Heart right ventricle (tissue), 16 donors: ENCODE measurements at regions of chr14 and their contacts with region 1.

Region 1: GRCh38 chr14:101440496-101440895 is 120.8 kb upstream of the DIO3 start:
- DNase-seq: no peak
- ATAC-seq: no peak
- H3K4me3 ChIP-seq: no peak overlapping the region
- H3K27ac ChIP-seq: no peak overlapping the region
- H3K4me1 ChIP-seq: peaks cover 0 to 7% (median 0%) of the 10 kb centered on the region in 9 donors
- H3K27me3 ChIP-seq: peaks cover 0 to 43% (median 20%) of the 10 kb centered on the region in 7 donors
- CTCF ChIP-seq: no peak

Region 2: DNA sequence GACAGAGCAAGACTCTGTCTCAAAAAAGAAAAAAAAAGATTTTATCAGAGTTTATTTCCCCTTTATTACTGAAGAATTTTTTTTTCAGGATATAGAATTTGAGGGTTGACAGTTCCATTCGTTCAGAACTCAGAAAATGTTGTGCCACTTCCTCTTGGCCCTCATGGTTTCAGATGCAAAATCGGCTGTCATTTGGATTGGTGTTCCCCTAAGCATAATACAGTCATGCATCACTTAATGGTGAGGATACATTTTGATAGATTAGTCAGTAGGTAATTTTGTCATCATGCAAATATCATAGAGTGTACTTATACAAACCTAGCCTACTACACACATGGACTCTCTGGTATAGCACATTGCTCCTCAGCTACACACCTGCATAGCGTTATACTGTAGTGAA is 273.1 kb before region 1 on chr14:
- intact Hi-C with region 1: no loop called
- DNase-seq: no peak
- ATAC-seq: no peak
- H3K4me3 ChIP-seq: no peak overlapping the region
- H3K27ac ChIP-seq: no peak overlapping the region
- H3K4me1 ChIP-seq: no peaks in the 10 kb centered on the region
- H3K27me3 ChIP-seq: peaks cover 0 to 15% (median 0%) of the 10 kb centered on the region in 7 donors
- CTCF ChIP-seq: no peak

Region 3: GRCh38 chr14:101495827-101496775 is 55.6 kb after region 1 on chr14:
- intact Hi-C with region 1: loop called in 1 of 10 experiments (anchors 2 kb)
- DNase-seq: no peak
- ATAC-seq: no peak
- H3K4me3 ChIP-seq: no peak overlapping the region
- H3K27ac ChIP-seq: no peak overlapping the region
- H3K4me1 ChIP-seq: no peaks in the 10 kb centered on the region
- H3K27me3 ChIP-seq: peaks cover 5 to 84% (median 34%) of the 10 kb centered on the region in 7 donors
- CTCF ChIP-seq: no peak

Region 4: DNA sequence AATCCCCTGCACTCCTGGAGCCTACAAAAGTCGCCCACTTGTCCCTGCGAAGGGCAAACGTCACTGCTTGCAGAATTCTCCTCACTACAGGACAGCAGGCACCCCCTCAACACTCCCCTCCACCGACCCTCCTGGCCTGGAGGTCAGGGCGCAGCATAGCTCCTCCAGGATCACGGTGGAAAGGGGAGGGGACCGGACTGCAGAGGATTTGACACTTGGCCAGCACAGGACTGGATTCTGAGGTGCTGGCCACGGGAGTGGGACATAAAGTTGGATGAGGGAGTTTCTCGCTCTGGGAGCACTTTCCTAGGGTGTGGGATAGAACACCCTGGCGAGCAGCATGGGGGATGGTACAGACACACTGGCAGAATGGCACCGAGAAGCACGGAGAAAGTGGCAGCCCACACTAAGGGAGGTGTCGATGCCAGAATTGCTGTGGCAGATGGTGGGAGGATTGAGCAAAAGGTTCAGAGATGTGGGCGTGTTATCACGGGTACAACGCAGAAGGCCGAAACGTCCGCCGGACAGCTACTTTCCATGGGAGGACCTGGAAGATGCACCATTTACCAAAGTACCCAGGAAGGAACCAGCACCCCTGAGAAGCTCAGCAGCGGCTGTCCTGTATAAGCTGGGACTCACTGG is 69.4 kb after region 1 on chr14:
- intact Hi-C with region 1: loop called in 1 of 10 experiments (anchors 2 kb)
- DNase-seq: no peak
- ATAC-seq: no peak
- H3K4me3 ChIP-seq: no peak overlapping the region
- H3K27ac ChIP-seq: no peak overlapping the region
- H3K4me1 ChIP-seq: peaks cover 0 to 6% (median 0%) of the 10 kb centered on the region in 9 donors
- H3K27me3 ChIP-seq: peaks cover 0 to 10% (median 0%) of the 10 kb centered on the region in 7 donors
- CTCF ChIP-seq: no peak

Region 5: DNA sequence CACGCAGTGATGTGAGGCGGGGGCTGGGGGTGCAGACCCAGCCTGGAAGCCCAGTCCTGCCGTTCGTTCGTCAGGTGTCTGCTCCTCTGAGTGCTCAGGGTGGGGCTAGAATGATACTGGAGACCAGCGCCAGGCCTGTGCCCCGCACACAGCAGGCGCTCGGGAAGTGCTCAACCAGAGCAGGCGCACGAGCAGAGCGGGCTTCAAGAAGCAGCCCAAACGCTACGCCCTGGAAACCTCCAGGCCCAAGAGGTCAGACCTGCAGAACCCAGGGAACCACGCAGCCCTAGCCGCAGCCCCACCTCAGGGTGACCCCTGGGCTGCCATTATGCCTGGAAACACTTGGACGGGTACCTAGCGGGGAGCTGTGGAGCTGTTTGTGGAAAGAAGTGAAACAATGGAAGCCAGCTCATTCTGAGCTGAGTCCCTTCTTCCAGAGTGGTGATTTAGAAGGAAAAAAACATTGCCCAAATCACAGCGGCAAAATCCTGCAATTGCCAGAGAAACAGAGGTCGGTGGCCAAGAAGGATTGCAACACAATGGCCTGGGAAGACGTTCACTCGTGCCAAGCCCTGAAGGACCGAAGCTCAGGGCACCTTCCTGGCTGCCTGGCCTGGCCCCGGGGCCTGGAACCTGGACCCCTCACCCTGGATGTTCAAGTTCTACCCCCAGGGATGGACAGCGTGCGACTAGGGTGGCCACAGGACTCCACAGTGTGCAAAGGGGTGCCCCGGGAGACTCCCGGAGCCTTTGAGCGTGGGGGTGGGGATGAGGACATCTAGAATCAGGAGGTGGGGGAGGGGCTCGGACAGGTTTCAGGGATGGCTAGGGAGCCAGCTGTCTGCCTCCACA is 80.4 kb after region 1 on chr14:
- intact Hi-C with region 1: no loop called
- DNase-seq: no peak
- ATAC-seq: peak in 6 of 8 donors; percentile 16 to 47 (median 22)
- H3K4me3 ChIP-seq: no peak overlapping the region
- H3K27ac ChIP-seq: no peak overlapping the region
- H3K4me1 ChIP-seq: no peaks in the 10 kb centered on the region
- H3K27me3 ChIP-seq: peaks cover 0 to 9% (median 0%) of the 10 kb centered on the region in 7 donors
- CTCF ChIP-seq: no peak